Activated T-helper 1 cell treated with anti-CD3 and anti-CD28 coated beads, Interleukin-12 subunit alpha, Interleukin-12 subunit beta, Interleukin-2, Interleukin-4 antibody, amounts not matched to agents 30 ng/mL and 10 ng/mL and 1 ng/mL, durations not matched to agents 14 hours and 24 hours and 36 hours (primary cell): ENCODE measurements at regions of chr1 and their contacts with region 1.

Region 1: DNA sequence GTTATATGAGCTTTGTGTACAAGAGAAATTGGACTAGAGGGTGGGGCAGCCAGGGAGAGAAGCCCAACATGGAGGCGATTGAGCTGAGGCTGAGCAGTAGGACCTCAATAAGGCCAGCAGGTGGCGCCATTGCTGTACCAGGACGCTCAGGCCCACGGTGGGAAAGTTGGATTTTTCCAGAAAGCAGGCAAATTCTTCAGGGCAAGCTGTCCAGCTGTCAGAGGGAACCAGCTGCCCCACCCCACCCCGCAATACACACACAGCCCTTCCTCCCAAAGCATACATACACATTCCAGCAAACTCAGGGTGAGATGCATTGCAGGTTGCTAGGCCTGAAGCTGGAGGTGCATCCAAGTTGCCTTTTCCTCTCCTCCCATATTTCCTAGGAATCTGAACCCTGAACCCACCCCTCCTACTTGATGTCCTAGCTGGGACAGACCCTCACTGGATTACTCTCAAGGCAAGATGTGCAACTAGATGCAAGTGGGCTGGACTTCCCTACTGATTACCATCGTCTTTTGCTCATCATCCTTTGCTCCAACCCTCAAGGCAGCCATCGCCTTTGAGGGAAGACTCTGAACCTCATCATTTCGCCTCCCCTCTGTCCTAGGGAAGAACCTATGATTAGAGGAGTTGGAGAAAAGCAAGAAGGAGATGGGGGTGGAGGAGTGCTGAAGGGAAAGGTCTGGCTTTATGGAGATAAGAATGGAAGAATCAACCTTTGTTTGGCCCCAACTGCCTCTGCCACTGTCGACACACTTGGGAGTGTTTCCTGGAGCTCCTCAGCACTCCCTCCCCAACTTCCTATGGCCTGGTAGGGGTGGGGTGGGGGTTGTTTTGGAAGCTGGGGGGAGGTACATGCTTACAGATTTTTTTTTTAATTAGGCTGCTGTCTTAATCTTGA is 25.5 kb downstream of the CD34 start:
- DNase-seq: peak; percentile 53
- H3K4me3 Mint-ChIP-seq: no peak overlapping the region
- H3K27ac Mint-ChIP-seq: peak overlapping the region; percentile 94
- H3K4me1 Mint-ChIP-seq: peaks cover 39% of the 10 kb centered on the region
- H3K27me3 Mint-ChIP-seq: no peaks in the 10 kb centered on the region

Region 2: GRCh38 chr1:207612762-207613161 is 272.6 kb before region 1 on chr1:
- intact Hi-C with region 1: no loop called
- DNase-seq: no peak
- H3K4me3 Mint-ChIP-seq: no peak overlapping the region
- H3K27ac Mint-ChIP-seq: no peak overlapping the region
- H3K4me1 Mint-ChIP-seq: no peaks in the 10 kb centered on the region
- H3K27me3 Mint-ChIP-seq: peaks cover 4% of the 10 kb centered on the region

Region 3: DNA sequence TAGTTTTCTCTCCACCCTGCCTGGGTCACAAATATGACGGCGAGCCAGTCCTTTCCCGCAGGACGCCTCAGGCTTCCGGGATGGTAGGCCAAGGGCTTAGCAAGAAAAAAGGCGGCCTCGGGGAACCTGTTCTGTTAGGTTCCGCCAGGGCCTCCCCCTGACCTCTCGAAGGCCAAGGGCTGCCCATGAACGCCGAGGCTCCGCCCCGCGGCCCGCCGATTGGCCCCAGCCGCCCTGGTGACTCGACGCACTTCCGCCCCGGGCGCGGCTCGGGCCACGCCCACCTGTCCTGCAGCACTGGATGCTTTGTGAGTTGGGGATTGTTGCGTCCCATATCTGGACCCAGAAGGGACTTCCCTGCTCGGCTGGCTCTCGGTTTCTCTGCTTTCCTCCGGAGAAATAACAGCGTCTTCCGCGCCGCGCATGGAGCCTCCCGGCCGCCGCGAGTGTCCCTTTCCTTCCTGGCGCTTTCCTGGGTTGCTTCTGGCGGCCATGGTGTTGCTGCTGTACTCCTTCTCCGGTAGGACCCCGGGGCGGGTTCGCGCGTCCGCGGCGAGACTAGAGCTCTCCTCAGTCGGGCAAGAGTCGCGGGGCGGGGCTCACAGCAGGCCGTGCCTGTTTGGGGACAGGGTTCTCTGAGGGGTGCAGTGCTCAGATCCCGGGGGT is 133.5 kb before region 1 on chr1 and contains the start of gene CD46:
- intact Hi-C with region 1: loop called (anchors 2 kb)
- DNase-seq: peak; percentile 93
- H3K4me3 Mint-ChIP-seq: peak within 1 kb of the TSS; percentile 98
- H3K27ac Mint-ChIP-seq: peak within 1 kb of the TSS; percentile 95
- H3K4me1 Mint-ChIP-seq: peaks cover 61% of the 10 kb centered on the region
- H3K27me3 Mint-ChIP-seq: no peaks in the 10 kb centered on the region
- total RNA-seq, gene CD46: 101 and 105 TPM in 2 replicates

Region 4: GRCh38 chr1:207828485-207829158 is 56.8 kb before region 1 on chr1:
- intact Hi-C with region 1: loop called (anchors 1 kb)
- DNase-seq: peak; percentile 36
- H3K4me3 Mint-ChIP-seq: no peak overlapping the region
- H3K27ac Mint-ChIP-seq: peak overlapping the region; percentile 67
- H3K4me1 Mint-ChIP-seq: peaks cover 98% of the 10 kb centered on the region
- H3K27me3 Mint-ChIP-seq: peaks cover 2% of the 10 kb centered on the region

Region 5: GRCh38 chr1:207963427-207964194 is 78.2 kb after region 1 on chr1:
- intact Hi-C with region 1: loop called (anchors 1 kb)
- DNase-seq: peak; percentile 84
- H3K4me3 Mint-ChIP-seq: peak overlapping the region; percentile 83
- H3K27ac Mint-ChIP-seq: no peak overlapping the region
- H3K4me1 Mint-ChIP-seq: peaks cover 11% of the 10 kb centered on the region
- H3K27me3 Mint-ChIP-seq: peaks cover 38% of the 10 kb centered on the region

Region 6: GRCh38 chr1:208093754-208094719 is 208.7 kb after region 1 on chr1:
- intact Hi-C with region 1: loop called (anchors 1 kb)
- DNase-seq: peak; percentile 43
- H3K4me3 Mint-ChIP-seq: no peak overlapping the region
- H3K27ac Mint-ChIP-seq: no peak overlapping the region
- H3K4me1 Mint-ChIP-seq: no peaks in the 10 kb centered on the region
- H3K27me3 Mint-ChIP-seq: peaks cover 14% of the 10 kb centered on the region